ENCODE measurements at regions of chr6 and their contacts with region 1.

Region 1: DNA sequence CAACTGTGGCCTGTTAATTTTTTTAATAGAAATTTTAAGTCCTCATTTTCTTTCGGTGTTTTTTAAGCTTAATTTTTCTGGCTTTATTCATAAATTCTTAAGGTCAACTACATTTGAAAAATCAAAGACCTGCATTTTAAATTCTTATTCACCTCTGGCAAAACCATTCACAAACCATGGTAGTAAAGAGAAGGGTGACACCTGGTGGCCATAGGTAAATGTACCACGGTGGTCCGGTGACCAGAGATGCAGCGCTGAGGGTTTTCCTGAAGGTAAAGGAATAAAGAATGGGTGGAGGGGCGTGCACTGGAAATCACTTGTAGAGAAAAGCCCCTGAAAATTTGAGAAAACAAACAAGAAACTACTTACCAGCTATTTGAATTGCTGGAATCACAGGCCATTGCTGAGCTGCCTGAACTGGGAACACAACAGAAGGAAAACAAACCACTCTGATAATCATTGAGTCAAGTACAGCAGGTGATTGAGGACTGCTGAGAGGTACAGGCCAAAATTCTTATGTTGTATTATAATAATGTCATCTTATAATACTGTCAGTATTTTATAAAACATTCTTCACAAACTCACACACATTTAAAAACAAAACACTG is 10.1 kb downstream of the HFE start:
- DNase-seq: peak in 4 of 5 donors; percentile 63 to 86 (median 77)
- H3K4me3 ChIP-seq: no peak overlapping the region
- H3K27ac ChIP-seq: no peak overlapping the region
- H3K4me1 ChIP-seq: no peaks in the 10 kb centered on the region
- H3K27me3 ChIP-seq: no peaks in the 10 kb centered on the region
- CTCF ChIP-seq: peak; percentile 72

Region 2: DNA sequence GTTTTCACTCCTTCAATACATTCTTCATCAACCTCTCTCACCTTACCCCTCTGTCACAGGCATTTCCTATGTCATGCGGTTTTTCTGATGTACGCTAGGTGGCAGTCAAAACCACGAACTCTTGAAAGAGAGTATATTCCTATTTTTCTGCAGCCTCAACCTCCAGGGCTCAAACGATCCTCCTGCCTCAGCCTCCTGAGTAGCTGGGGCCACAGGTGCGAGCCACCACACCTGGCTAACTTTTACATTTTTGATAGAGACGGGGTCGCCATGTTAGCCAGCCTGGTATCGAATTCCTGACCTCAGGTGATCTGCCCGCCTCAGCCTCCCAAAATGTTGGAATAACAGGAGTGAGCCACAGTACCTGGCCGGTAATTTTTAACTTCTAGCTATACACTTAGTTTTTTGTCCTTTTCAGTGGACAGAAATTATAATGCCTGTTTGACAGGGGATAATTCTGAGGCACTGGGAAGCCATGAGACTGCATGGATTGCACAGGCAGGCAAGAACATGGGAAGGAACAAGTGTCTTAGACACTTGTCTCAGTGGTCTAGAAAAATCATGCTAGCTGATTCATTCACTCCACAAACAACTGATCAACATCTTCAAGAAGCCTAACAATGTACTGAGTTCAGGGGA is 32.6 kb before region 1 on chr6:
- intact Hi-C with region 1: loop called (anchors 5 kb)
- DNase-seq: peak in 3 of 5 donors; percentile 23 to 76 (median 72)
- H3K4me3 ChIP-seq: no peak overlapping the region
- H3K27ac ChIP-seq: no peak overlapping the region
- H3K4me1 ChIP-seq: no peaks in the 10 kb centered on the region
- H3K27me3 ChIP-seq: no peaks in the 10 kb centered on the region
- CTCF ChIP-seq: peak; percentile 81